BJ (cell line): ENCODE measurements at regions of chr11 and their contacts with region 1.

Region 1: GRCh38 chr11:121207485-121208115 is 85.0 kb upstream of the SC5D start:
- DNase-seq: peak; percentile 16
- H3K4me3 ChIP-seq: no peak overlapping the region
- H3K27me3 ChIP-seq: peaks cover 2% of the 10 kb centered on the region; the same call in 1 of the 2 replicates
- CTCF ChIP-seq: no peak

Region 2: GRCh38 chr11:121194731-121195596 is 12.6 kb before region 1 on chr11:
- CTCF ChIA-PET with region 1: interaction called, 16 read pairs
- POLR2A ChIA-PET with region 1: no interaction called
- DNase-seq: no peak
- H3K4me3 ChIP-seq: no peak overlapping the region
- H3K27me3 ChIP-seq: no peaks in the 10 kb centered on the region; the same call in 1 of the 2 replicates
- CTCF ChIP-seq: peak; percentile 83

Region 3: DNA sequence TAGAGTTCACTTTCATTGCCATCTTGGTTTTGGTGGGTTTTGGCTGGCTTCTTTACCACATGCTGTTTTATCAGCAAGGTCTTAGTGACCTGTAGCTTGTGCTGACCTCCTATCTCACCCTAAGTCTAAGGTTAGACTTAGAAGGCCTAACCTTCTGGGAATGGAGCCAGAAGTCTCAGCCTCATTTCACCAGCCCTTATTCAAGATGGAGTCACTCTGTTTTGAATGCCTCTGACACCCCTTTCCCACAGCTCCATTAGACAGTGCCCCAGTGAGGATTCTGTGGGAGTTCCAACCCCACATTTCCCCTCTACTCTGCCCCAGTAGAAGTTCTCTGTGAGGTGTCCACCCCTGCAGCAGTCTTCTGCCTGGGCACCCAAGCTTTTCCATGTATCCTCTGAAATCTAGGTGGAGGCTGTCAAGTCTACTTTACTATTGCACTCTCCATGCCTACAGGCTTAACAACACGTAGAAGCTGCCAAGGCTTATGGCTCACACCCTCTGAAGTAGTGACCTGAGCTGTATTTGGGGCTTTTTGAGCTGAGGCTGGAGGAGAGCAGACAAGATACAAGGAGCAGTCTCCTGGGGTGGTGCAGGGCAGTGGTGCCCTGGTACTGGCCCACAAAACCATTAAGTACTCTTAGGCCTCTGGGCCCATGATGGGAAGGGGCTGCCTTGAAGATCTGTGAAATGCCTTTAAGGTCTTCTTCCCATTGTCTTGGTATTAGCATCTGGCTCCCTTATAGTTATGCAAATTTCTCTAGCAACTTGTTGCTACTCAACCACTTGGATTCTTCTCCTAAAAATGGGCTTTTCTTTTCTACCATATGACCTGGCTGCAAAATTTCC is 19.0 kb after region 1 on chr11:
- CTCF ChIA-PET with region 1: no interaction called
- POLR2A ChIA-PET with region 1: no interaction called
- DNase-seq: no peak
- H3K4me3 ChIP-seq: no peak overlapping the region
- H3K27me3 ChIP-seq: no peaks in the 10 kb centered on the region; the same call in 1 of the 2 replicates
- CTCF ChIP-seq: no peak